ENCODE measurements at regions of chr2 and their contacts with region 1.

Region 1: GRCh38 chr2:99489761-99490622 is at the start of gene REV1:
- DNase-seq: peak; percentile 92 to 93
- ATAC-seq: peak; percentile 92 to 96 (median 94)
- H3K4me3 ChIP-seq: peak within 1 kb of the TSS; percentile 55 to 96 (median 86)
- H3K27ac ChIP-seq: peak within 1 kb of the TSS; percentile 92 to 99 (median 98)
- H3K4me1 ChIP-seq: peaks cover 5 to 45% (median 41%) of the 10 kb centered on the region in 9 donors
- H3K27me3 ChIP-seq: no peaks in the 10 kb centered on the region
- CTCF ChIP-seq: peak; percentile 66 to 88 (median 77)
- total RNA-seq, gene REV1: 26.3 to 83.1 (median 31.6) TPM

Region 2: DNA sequence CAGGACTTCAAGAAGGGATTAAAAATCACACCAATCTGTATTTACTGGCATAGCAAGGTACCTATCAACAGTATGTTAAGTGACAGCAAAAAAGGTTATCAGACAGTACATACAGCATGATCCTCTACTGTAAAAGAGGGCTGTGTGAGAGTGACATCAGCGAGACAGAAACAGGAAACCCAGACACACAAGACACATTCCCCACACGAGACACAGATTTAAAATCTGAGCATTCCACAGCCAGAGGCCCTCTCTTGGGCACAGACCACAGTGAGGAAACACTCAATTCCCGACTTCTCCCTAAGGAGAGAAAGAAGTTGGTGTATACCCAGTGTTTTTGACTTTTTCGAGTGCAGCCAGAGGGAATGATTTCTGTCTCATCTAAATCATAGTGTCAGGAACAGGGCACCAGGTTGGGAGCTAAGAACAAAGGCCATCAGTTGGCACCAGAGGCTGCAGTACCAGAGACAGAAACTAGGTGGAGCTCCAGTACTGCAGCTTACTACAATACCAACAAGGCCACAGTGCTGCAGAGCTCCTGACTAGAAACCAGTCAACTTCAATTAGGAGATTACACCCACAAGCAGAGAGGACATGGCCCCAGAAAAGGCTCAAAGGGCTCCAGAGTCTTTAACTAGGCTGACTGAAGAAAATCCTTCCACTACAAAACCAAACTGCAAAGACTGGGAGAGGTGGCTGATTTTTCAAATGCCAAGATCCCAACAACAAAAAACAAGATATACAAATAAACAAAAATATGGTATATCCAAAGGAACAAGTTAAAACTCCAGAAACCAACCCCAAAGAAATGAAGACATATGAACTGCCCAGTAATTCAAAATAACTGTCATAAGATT is 840.6 kb before region 1 on chr2:
- intact Hi-C with region 1: loop called in 1 of 10 experiments (anchors 10 kb)
- DNase-seq: peak; percentile 25 to 85
- ATAC-seq: peak; percentile 86 to 96 (median 92)
- H3K4me3 ChIP-seq: no peak overlapping the region
- H3K27ac ChIP-seq: peak overlapping the region in 1 of 10 donors; percentile 18
- H3K4me1 ChIP-seq: peaks cover 0 to 22% (median 0%) of the 10 kb centered on the region in 9 donors
- H3K27me3 ChIP-seq: no peaks in the 10 kb centered on the region
- CTCF ChIP-seq: peak; percentile 97 to 99 (median 99)

Region 3: GRCh38 chr2:99180755-99181623 is 309.0 kb before region 1 on chr2 and contains the starts of genes MITD1 and MRPL30:
- intact Hi-C with region 1: loop called in 2 of 10 experiments (anchors 5 kb)
- DNase-seq: peak; percentile 85 to 94
- ATAC-seq: peak; percentile 97 to 100 (median 99)
- H3K4me3 ChIP-seq: peak within 1 kb of the TSS; percentile 35 to 99 (median 74)
- H3K27ac ChIP-seq: peak within 1 kb of the TSS in 9 of 10 donors; percentile 60 to 89 (median 77)
- H3K4me1 ChIP-seq: peaks cover 4 to 47% (median 36%) of the 10 kb centered on the region in 9 donors
- H3K27me3 ChIP-seq: no peaks in the 10 kb centered on the region
- CTCF ChIP-seq: no peak
- total RNA-seq, gene MITD1: 9.3 to 14.2 (median 11.8) TPM
- total RNA-seq, gene MRPL30: 31.9 to 43.2 (median 36.1) TPM

Region 4: DNA sequence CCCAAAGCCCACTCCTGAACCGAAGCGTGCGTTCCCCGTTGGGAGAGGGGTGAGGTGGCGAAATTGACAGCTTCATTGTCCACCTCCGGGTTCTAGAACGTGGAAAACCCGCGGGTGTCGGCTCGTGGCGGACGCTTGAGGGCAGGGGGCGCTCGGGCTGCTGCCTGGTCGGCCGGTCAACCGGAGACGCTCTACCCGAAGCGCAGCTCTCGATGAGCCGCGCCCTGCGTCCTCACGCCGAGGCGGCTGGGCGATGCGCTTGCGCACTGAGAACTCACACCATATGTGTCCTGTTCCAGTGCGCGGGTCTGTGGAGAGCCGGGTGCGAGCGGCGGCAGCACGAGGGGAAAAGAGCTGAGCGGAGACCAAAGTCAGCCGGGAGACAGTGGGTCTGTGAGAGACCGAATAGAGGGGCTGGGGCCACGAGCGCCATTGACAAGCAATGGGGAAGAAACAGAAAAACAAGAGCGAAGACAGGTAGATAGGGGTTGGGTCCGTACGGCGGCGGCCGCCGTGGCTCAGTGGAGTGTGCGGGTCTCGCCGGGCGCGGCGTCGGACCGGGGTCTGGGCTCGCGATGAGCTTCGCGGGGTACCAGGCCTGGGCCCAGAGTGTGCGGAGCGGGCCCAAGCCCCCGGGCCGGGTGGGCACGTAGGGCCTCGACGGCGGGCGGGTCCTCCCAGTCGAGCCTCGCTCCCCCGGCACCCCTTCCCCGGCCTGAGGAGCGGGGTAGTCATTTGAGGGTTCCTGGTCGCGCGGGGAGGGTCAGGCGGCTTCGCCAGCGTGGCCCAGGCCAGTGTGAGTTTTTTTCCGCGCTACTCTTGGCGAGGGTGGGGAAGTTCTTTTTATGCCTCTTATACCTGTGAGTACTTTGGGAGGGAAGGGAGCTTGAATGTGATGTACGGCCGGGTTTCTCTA is 152.6 kb before region 1 on chr2 and contains the start of gene EIF5B:
- intact Hi-C with region 1: loop called in 9 of 10 experiments (anchors 1 to 10 kb)
- DNase-seq: peak; percentile 95 to 97
- ATAC-seq: peak; percentile 91 to 96 (median 94)
- H3K4me3 ChIP-seq: peak within 1 kb of the TSS; percentile 66 to 100 (median 90)
- H3K27ac ChIP-seq: peak within 1 kb of the TSS; percentile 55 to 98 (median 89)
- H3K4me1 ChIP-seq: peaks cover 3 to 57% (median 42%) of the 10 kb centered on the region in 9 donors
- H3K27me3 ChIP-seq: no peaks in the 10 kb centered on the region
- CTCF ChIP-seq: peak; percentile 40 to 89 (median 70)
- total RNA-seq, gene EIF5B: 64.5 to 123 (median 91.8) TPM

Region 5: DNA sequence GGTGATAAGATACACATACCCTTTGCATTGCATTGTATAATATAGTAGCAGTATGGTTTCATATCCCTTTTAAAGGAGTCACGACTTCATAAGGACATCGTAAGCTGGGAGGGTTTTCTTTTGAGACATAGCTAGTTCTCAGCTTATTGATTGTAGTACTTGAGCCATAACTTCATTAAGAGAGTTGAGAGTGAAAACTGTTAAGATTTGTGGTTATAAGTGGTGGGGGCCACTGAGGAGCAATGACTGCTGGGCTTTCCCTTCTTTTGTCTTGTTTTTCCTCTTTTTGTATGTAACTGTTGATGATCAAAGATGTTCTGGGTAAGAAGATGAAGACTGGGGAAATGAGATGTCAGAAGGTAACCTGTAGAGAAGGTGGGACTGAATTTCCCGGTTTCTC is 141.8 kb before region 1 on chr2:
- intact Hi-C with region 1: loop called in 1 of 10 experiments (anchors 10 kb)
- DNase-seq: no peak
- ATAC-seq: no peak
- H3K4me3 ChIP-seq: no peak overlapping the region
- H3K27ac ChIP-seq: no peak overlapping the region
- H3K4me1 ChIP-seq: peaks cover 0 to 23% (median 11%) of the 10 kb centered on the region in 9 donors
- H3K27me3 ChIP-seq: no peaks in the 10 kb centered on the region
- CTCF ChIP-seq: no peak

Region 6: GRCh38 chr2:99442837-99443236 is 47.2 kb before region 1 on chr2:
- intact Hi-C with region 1: loop called in 8 of 10 experiments (anchors 2 to 5 kb)
- DNase-seq: no peak
- ATAC-seq: peak in 6 of 8 donors; percentile 42 to 71 (median 62)
- H3K4me3 ChIP-seq: no peak overlapping the region
- H3K27ac ChIP-seq: no peak overlapping the region
- H3K4me1 ChIP-seq: peaks cover 0 to 14% (median 7%) of the 10 kb centered on the region in 9 donors
- H3K27me3 ChIP-seq: no peaks in the 10 kb centered on the region
- CTCF ChIP-seq: peak in 8 of 9 donors; percentile 26 to 70 (median 53)

Region 7: GRCh38 chr2:99448556-99448955 is 41.4 kb before region 1 on chr2:
- intact Hi-C with region 1: loop called in 8 of 10 experiments (anchors 2 to 5 kb)
- DNase-seq: no peak
- ATAC-seq: no peak
- H3K4me3 ChIP-seq: no peak overlapping the region
- H3K27ac ChIP-seq: no peak overlapping the region
- H3K4me1 ChIP-seq: peaks cover 0 to 30% (median 13%) of the 10 kb centered on the region in 9 donors
- H3K27me3 ChIP-seq: no peaks in the 10 kb centered on the region
- CTCF ChIP-seq: no peak

Measured in heart right ventricle (tissue), 16 donors.